PC-3 (cell line): ENCODE measurements at regions of chrX and their contacts with region 1.

Region 1: GRCh38 chrX:119693040-119693995 is at the start of gene SEPTIN6:
- DNase-seq: peak; percentile 65
- ATAC-seq: peak; percentile 81
- H3K4me3 ChIP-seq: peak within 1 kb of the TSS; percentile 82
- H3K27ac ChIP-seq: no peak within 1 kb of the TSS
- H3K4me1 ChIP-seq: peaks cover 11% of the 10 kb centered on the region
- H3K27me3 ChIP-seq: no peaks in the 10 kb centered on the region
- CTCF ChIP-seq: no peak
- total RNA-seq, gene SEPTIN6: 28.9 and 39.1 TPM in 2 replicates

Region 2: GRCh38 chrX:119614776-119615175 is 78.5 kb before region 1 on chrX:
- CTCF ChIA-PET with region 1: interaction called, 4 read pairs
- POLR2A ChIA-PET with region 1: no interaction called
- intact Hi-C with region 1: loop called (anchors 5 kb)
- DNase-seq: no peak
- ATAC-seq: no peak
- H3K4me3 ChIP-seq: no peak overlapping the region
- H3K27ac ChIP-seq: no peak overlapping the region
- H3K4me1 ChIP-seq: no peaks in the 10 kb centered on the region
- H3K27me3 ChIP-seq: no peaks in the 10 kb centered on the region
- CTCF ChIP-seq: no peak

Region 3: GRCh38 chrX:119729408-119730201 is 36.3 kb after region 1 on chrX:
- CTCF ChIA-PET with region 1: interaction called, 3 read pairs
- POLR2A ChIA-PET with region 1: no interaction called
- intact Hi-C with region 1: loop called (anchors 2 kb)
- DNase-seq: peak; percentile 74
- ATAC-seq: peak; percentile 68
- H3K4me3 ChIP-seq: no peak overlapping the region
- H3K27ac ChIP-seq: no peak overlapping the region
- H3K4me1 ChIP-seq: no peaks in the 10 kb centered on the region
- H3K27me3 ChIP-seq: no peaks in the 10 kb centered on the region
- CTCF ChIP-seq: peak; percentile 66

Region 4: GRCh38 chrX:119775517-119776238 is 82.4 kb after region 1 on chrX:
- CTCF ChIA-PET with region 1: no interaction called
- POLR2A ChIA-PET with region 1: interaction called, 10 read pairs
- intact Hi-C with region 1: no loop called
- DNase-seq: no peak
- ATAC-seq: no peak
- H3K4me3 ChIP-seq: no peak overlapping the region
- H3K27ac ChIP-seq: no peak overlapping the region
- H3K4me1 ChIP-seq: no peaks in the 10 kb centered on the region
- H3K27me3 ChIP-seq: no peaks in the 10 kb centered on the region
- CTCF ChIP-seq: no peak